ENCODE measurements at regions of chr10 and their contacts with region 1.

Region 1: DNA sequence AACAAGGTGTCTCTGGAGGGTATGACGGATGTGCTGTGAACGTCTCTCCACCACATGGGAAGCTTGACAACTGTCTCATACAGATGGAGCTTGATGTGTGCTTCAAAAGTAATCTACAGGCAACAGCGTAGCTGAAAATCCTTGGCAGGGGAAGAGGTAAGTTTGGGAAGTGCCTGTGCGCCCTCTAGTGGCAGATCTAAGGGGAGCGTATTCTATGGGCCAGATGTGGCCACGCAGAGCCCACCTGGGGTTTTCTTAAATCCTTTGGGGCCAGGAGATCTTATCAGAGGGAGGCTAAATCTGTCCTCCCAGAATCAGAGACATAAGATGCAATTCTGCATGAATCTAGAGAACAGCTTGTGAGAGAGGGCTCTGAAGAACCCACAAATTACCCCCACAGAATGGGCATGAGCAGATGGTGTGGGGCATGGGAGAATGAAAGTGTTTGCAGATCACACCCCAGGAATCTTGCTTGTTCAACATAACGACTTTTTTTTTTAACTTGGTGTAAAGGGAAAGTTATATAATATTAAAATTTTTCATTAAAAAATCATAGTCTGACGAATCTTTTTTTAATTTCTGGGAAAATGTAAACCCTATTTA is 91.2 kb upstream of the MPP7 start:
- DNase-seq: peak; percentile 49
- H3K4me3 ChIP-seq: no peak overlapping the region
- H3K27ac ChIP-seq: no peak overlapping the region
- H3K4me1 ChIP-seq: no peaks in the 10 kb centered on the region
- H3K27me3 ChIP-seq: no peaks in the 10 kb centered on the region
- CTCF ChIP-seq: peak; percentile 88 to 94
- POLR2A ChIP-seq: no peak

Region 2: GRCh38 chr10:27369880-27370279 is 1024.2 kb before region 1 on chr10:
- CTCF ChIA-PET with region 1: interaction called, 7 read pairs
- POLR2A ChIA-PET with region 1: no interaction called
- dilution Hi-C with region 1: no loop called
- intact Hi-C with region 1: loop called (anchors 1 kb)
- DNase-seq: peak; percentile 16
- H3K4me3 ChIP-seq: no peak overlapping the region
- H3K27ac ChIP-seq: no peak overlapping the region
- H3K4me1 ChIP-seq: no peaks in the 10 kb centered on the region
- H3K27me3 ChIP-seq: peaks cover 0 to 3% of the 10 kb centered on the region in 2 experiments
- CTCF ChIP-seq: no peak
- POLR2A ChIP-seq: no peak

Region 3: GRCh38 chr10:27661514-27662286 is 732.4 kb before region 1 on chr10:
- CTCF ChIA-PET with region 1: no interaction called
- POLR2A ChIA-PET with region 1: no interaction called
- dilution Hi-C with region 1: no loop called
- intact Hi-C with region 1: no loop called
- DNase-seq: no peak
- H3K4me3 ChIP-seq: no peak overlapping the region
- H3K27ac ChIP-seq: no peak overlapping the region
- H3K4me1 ChIP-seq: no peaks in the 10 kb centered on the region
- H3K27me3 ChIP-seq: peaks cover 0 to 8% of the 10 kb centered on the region in 2 experiments
- CTCF ChIP-seq: no peak
- POLR2A ChIP-seq: no peak

Region 4: DNA sequence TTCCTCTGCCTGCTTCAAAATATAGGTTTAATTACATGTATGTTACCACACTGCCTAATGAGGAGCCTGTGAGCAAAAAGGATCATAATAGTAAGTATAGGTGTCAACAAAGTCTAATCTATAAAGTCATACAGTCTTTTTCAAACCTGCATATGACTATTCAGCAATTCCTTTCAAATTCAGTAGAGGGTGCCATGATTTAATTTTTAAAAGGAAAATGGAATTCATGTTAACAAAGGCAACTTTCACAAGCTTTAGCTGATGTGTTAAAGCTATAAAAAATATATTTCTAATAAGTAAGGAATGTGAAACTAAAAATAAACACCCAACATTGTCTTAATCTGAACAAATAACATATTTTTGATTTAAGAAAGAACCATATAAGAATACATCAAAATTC is 143.3 kb before region 1 on chr10:
- CTCF ChIA-PET with region 1: interaction called, 27 read pairs
- POLR2A ChIA-PET with region 1: no interaction called
- dilution Hi-C with region 1: no loop called
- intact Hi-C with region 1: no loop called
- DNase-seq: peak; percentile 22
- H3K4me3 ChIP-seq: no peak overlapping the region
- H3K27ac ChIP-seq: no peak overlapping the region
- H3K4me1 ChIP-seq: no peaks in the 10 kb centered on the region
- H3K27me3 ChIP-seq: peaks cover 7% of the 10 kb centered on the region in 2 experiments
- CTCF ChIP-seq: peak; percentile 15 to 19
- POLR2A ChIP-seq: no peak

Region 5: DNA sequence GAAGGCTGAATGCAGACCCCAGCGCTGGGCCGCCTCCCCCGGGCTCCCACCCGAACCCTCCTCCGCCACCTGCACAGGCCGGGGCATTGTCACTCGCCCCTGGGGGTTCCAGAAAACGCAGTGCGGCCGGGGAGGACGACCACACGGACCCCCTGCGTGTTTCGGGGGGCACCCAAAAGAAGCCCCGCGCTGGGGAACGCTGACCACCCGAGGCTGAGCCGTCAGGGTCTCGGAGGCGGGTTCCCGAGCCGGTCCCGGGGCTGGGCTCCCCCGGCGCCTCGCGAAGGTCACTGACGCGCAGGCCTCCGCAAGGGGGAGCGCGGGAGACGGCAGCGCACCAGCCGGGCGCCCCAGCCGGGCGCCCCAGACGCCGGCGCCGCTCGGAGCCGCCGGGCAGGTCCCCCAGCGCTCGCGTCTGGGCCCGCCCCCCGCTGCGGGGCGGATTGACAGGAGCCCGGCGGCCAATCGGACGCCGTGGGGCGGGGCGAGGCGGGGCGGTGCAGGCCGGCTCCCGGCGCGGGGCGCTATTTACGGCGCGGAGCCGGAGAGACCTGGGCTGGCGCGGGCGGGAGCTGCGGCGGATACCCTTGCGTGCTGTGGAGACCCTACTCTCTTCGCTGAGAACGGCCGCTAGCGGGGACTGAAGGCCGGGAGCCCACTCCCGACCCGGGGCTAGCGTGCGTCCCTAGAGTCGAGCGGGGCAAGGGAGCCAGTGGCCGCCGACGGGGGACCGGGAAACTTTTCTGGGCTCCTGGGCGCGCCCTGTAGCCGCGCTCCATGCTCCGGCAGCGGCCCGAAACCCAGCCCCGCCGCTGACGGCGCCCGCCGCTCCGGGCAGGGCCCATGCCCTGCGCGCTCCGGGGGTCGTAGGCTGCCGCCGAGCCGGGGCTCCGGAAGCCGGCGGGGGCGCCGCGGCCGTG is 283.2 kb after region 1 on chr10 and contains the start of gene BAMBI:
- CTCF ChIA-PET with region 1: no interaction called
- POLR2A ChIA-PET with region 1: no interaction called
- dilution Hi-C with region 1: no loop called
- intact Hi-C with region 1: no loop called
- DNase-seq: peak; percentile 92
- H3K4me3 ChIP-seq: peak within 1 kb of the TSS; percentile 30 to 78 (median 64)
- H3K27ac ChIP-seq: peak within 1 kb of the TSS; percentile 28
- H3K4me1 ChIP-seq: peaks cover 32% of the 10 kb centered on the region
- H3K27me3 ChIP-seq: peaks cover 18 to 36% of the 10 kb centered on the region in 2 experiments
- CTCF ChIP-seq: peak; percentile 62 to 69
- POLR2A ChIP-seq: peak; percentile 96
- total RNA-seq, gene BAMBI: 3.2 and 4.3 TPM in 2 replicates

Region 6: DNA sequence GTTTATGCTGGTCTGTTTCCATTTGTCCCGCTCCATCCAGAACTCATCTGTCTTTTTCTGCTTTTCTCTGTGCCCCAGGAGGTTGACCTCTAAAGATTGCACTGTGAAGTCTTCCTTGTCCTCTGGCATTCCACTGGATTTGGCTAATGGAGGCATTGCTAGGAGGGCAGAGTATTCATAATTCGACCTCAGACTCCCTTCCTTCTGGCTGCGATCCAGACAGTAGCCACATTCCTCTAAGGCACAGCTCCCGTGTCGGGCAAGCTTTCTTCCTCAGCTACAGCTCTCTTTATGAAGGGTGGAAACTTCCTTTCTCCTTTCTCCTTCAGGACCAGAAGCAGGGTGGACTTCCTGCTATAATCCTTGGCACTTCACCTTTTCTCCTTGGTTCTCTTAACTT is 459.1 kb after region 1 on chr10:
- CTCF ChIA-PET with region 1: no interaction called
- POLR2A ChIA-PET with region 1: no interaction called
- dilution Hi-C with region 1: no loop called
- intact Hi-C with region 1: no loop called
- DNase-seq: no peak
- H3K4me3 ChIP-seq: no peak overlapping the region
- H3K27ac ChIP-seq: no peak overlapping the region
- H3K4me1 ChIP-seq: no peaks in the 10 kb centered on the region
- H3K27me3 ChIP-seq: peaks cover 6 to 18% of the 10 kb centered on the region in 2 experiments
- CTCF ChIP-seq: no peak
- POLR2A ChIP-seq: no peak